MCF 10A (cell line): ENCODE measurements at regions of chr11 and their contacts with region 1.

Region 1: GRCh38 chr11:26993965-26994457 is at the start of gene FIBIN:
- DNase-seq: peak; percentile 78
- H3K4me3 Mint-ChIP-seq: peak within 1 kb of the TSS; percentile 77
- H3K27ac Mint-ChIP-seq: peak within 1 kb of the TSS; percentile 73
- H3K4me1 Mint-ChIP-seq: peaks cover 42% of the 10 kb centered on the region
- H3K27me3 Mint-ChIP-seq: no peaks in the 10 kb centered on the region
- CTCF ChIP-seq: no peak
- total RNA-seq, gene FIBIN: 5.0 and 12.5 TPM in 2 replicates

Region 2: GRCh38 chr11:26820739-26821138 is 173.3 kb before region 1 on chr11:
- CTCF ChIA-PET with region 1: no interaction called
- POLR2A ChIA-PET with region 1: no interaction called
- intact Hi-C with region 1: loop called (anchors 10 kb)
- DNase-seq: peak; percentile 82
- H3K4me3 Mint-ChIP-seq: no peak overlapping the region
- H3K27ac Mint-ChIP-seq: peak overlapping the region; percentile 40
- H3K4me1 Mint-ChIP-seq: peaks cover 14% of the 10 kb centered on the region
- H3K27me3 Mint-ChIP-seq: no peaks in the 10 kb centered on the region
- CTCF ChIP-seq: no peak

Region 3: DNA sequence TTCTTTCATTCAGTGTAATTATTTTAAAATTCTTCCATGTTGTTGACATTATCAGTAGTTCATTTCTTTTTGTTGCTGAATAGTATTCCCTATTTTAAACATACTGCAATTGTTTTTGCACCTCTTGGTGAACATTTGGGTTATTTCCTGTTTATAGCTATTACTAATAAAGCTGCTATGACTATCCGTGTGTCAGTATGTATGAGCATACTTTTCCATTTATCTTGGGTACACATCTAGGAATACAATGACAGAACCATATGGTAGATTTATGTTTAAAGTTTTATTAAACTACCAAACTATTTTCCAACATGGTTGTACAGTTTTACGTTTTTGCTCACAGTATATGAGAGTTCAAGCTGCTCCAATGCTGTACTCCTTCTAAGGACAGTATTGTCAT is 22.1 kb before region 1 on chr11:
- CTCF ChIA-PET with region 1: no interaction called
- POLR2A ChIA-PET with region 1: no interaction called
- intact Hi-C with region 1: no loop called
- DNase-seq: no peak
- H3K4me3 Mint-ChIP-seq: no peak overlapping the region
- H3K27ac Mint-ChIP-seq: no peak overlapping the region
- H3K4me1 Mint-ChIP-seq: no peaks in the 10 kb centered on the region
- H3K27me3 Mint-ChIP-seq: no peaks in the 10 kb centered on the region
- CTCF ChIP-seq: no peak

Region 4: GRCh38 chr11:27008811-27009535 is 15.0 kb after region 1 on chr11:
- CTCF ChIA-PET with region 1: no interaction called
- POLR2A ChIA-PET with region 1: interaction called, 11 read pairs
- intact Hi-C with region 1: no loop called
- DNase-seq: no peak
- H3K4me3 Mint-ChIP-seq: no peak overlapping the region
- H3K27ac Mint-ChIP-seq: no peak overlapping the region
- H3K4me1 Mint-ChIP-seq: peaks cover 16% of the 10 kb centered on the region
- H3K27me3 Mint-ChIP-seq: no peaks in the 10 kb centered on the region
- CTCF ChIP-seq: no peak

Region 5: GRCh38 chr11:27084518-27084917 is 90.5 kb after region 1 on chr11:
- CTCF ChIA-PET with region 1: no interaction called
- POLR2A ChIA-PET with region 1: interaction called, 22 read pairs
- intact Hi-C with region 1: no loop called
- DNase-seq: no peak
- H3K4me3 Mint-ChIP-seq: no peak overlapping the region
- H3K27ac Mint-ChIP-seq: no peak overlapping the region
- H3K4me1 Mint-ChIP-seq: peaks cover 32% of the 10 kb centered on the region
- H3K27me3 Mint-ChIP-seq: no peaks in the 10 kb centered on the region
- CTCF ChIP-seq: no peak